CD4-positive, alpha-beta memory T cell (primary cell): ENCODE measurements at regions of chr12 and their contacts with region 1.

Region 1: GRCh38 chr12:8644345-8645248 is 18.0 kb downstream of the MFAP5 start:
- DNase-seq: peak; percentile 52 to 65 (median 59)
- H3K4me3 ChIP-seq: peak overlapping the region in 1 of 2 donors; percentile 36
- H3K4me3 Mint-ChIP-seq: peak overlapping the region; percentile 68 to 92 (median 82)
- H3K27ac ChIP-seq: peak overlapping the region; percentile 38
- H3K27ac Mint-ChIP-seq: peak overlapping the region; percentile 83 to 98 (median 94)
- H3K4me1 ChIP-seq: peaks cover 42% of the 10 kb centered on the region
- H3K4me1 Mint-ChIP-seq: peaks cover 37 to 60% (median 46%) of the 10 kb centered on the region in 4 donors
- H3K27me3 ChIP-seq: no peaks in the 10 kb centered on the region
- H3K27me3 Mint-ChIP-seq: no peaks in the 10 kb centered on the region

Region 2: DNA sequence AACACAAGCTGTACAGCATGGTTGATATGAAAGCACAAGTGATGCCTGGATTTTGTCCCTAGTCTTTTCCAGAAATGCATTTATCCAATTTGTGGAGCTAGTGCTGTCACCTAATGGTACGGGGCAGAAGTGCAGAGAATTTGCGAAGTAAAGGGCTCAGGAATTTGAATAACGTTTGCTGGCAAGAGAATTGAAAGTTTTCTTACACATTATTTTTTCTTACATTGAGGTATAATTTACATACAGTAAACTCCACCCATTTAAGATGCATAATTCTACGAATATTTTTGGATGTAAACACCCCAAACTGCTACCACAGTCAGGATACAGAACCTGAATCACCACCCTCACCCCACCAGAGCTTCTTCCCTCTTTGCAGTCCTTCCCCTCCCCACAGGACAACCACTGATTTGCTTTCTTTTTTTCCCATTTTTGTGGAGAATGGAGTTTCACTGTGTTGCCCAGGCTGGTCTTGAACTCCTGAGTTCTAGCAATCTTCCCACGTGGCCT is 35.5 kb before region 1 on chr12:
- CTCF ChIA-PET with region 1: interaction called, 19 read pairs
- POLR2A ChIA-PET with region 1: interaction called, 12 read pairs
- intact Hi-C with region 1: no loop called
- DNase-seq: peak in 3 of 5 donors; percentile 2 to 10 (median 6)
- H3K4me3 ChIP-seq: no peak overlapping the region
- H3K4me3 Mint-ChIP-seq: peak overlapping the region; percentile 52 to 80 (median 72)
- H3K27ac ChIP-seq: no peak overlapping the region
- H3K27ac Mint-ChIP-seq: peak overlapping the region in 3 of 7 donors; percentile 3 to 57 (median 38)
- H3K4me1 ChIP-seq: peaks cover 5% of the 10 kb centered on the region
- H3K4me1 Mint-ChIP-seq: peaks cover 10 to 21% (median 15%) of the 10 kb centered on the region in 4 donors
- H3K27me3 ChIP-seq: no peaks in the 10 kb centered on the region
- H3K27me3 Mint-ChIP-seq: peaks cover 4% of the 10 kb centered on the region in 2 donors

Region 3: DNA sequence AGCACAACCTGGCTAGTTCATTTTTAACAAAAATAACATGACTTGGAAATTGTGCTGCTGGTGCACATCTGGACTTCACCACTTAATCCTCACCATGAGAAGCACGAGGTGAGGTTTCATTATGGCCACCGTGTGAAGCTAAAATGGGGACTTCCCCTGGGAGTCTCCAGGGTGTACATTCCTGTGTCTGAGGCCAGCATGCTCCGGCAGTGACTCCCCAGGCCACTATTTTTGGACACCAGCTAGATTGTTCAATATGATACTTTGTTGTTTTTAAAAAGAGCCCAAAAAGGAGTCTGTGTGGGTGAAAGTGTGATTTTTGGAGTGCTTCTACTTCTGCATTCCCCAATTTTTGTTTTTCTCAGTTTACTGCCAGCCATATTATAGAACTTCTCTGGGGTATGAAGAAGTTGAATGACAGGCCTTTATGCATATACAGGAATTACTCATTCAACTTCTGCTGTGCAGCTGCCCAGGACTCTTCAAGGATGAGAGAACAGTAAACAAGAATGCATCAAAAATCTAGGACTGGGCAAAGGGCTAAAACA is 15.0 kb before region 1 on chr12:
- CTCF ChIA-PET with region 1: interaction called, 4 read pairs
- POLR2A ChIA-PET with region 1: interaction called, 12 read pairs
- intact Hi-C with region 1: no loop called
- DNase-seq: no peak
- H3K4me3 ChIP-seq: no peak overlapping the region
- H3K4me3 Mint-ChIP-seq: no peak overlapping the region
- H3K27ac ChIP-seq: no peak overlapping the region
- H3K27ac Mint-ChIP-seq: no peak overlapping the region
- H3K4me1 ChIP-seq: no peaks in the 10 kb centered on the region
- H3K4me1 Mint-ChIP-seq: no peaks in the 10 kb centered on the region
- H3K27me3 ChIP-seq: no peaks in the 10 kb centered on the region
- H3K27me3 Mint-ChIP-seq: peaks cover 0 to 2% of the 10 kb centered on the region in 2 donors

Region 4: GRCh38 chr12:8655421-8655820 is 10.8 kb after region 1 on chr12:
- CTCF ChIA-PET with region 1: interaction called, 20 read pairs
- POLR2A ChIA-PET with region 1: interaction called, 18 read pairs
- intact Hi-C with region 1: loop called (anchors 1 kb)
- DNase-seq: no peak
- H3K4me3 ChIP-seq: no peak overlapping the region
- H3K4me3 Mint-ChIP-seq: no peak overlapping the region
- H3K27ac ChIP-seq: no peak overlapping the region
- H3K27ac Mint-ChIP-seq: no peak overlapping the region
- H3K4me1 ChIP-seq: no peaks in the 10 kb centered on the region
- H3K4me1 Mint-ChIP-seq: peaks cover 0 to 1% (median 0%) of the 10 kb centered on the region in 4 donors
- H3K27me3 ChIP-seq: no peaks in the 10 kb centered on the region
- H3K27me3 Mint-ChIP-seq: peaks cover 0 to 3% of the 10 kb centered on the region in 2 donors

Region 5: GRCh38 chr12:8662593-8662992 is 18.0 kb after region 1 on chr12 and contains the start of gene MFAP5:
- CTCF ChIA-PET with region 1: interaction called, 20 read pairs
- POLR2A ChIA-PET with region 1: interaction called, 18 read pairs
- intact Hi-C with region 1: loop called (anchors 1 kb)
- DNase-seq: no peak
- H3K4me3 ChIP-seq: no peak within 1 kb of the TSS
- H3K4me3 Mint-ChIP-seq: no peak within 1 kb of the TSS
- H3K27ac ChIP-seq: no peak within 1 kb of the TSS
- H3K27ac Mint-ChIP-seq: no peak within 1 kb of the TSS
- H3K4me1 ChIP-seq: no peaks in the 10 kb centered on the region
- H3K4me1 Mint-ChIP-seq: no peaks in the 10 kb centered on the region
- H3K27me3 ChIP-seq: no peaks in the 10 kb centered on the region
- H3K27me3 Mint-ChIP-seq: peaks cover 5% of the 10 kb centered on the region in 2 donors
- total RNA-seq, gene MFAP5: not detected

Region 6: DNA sequence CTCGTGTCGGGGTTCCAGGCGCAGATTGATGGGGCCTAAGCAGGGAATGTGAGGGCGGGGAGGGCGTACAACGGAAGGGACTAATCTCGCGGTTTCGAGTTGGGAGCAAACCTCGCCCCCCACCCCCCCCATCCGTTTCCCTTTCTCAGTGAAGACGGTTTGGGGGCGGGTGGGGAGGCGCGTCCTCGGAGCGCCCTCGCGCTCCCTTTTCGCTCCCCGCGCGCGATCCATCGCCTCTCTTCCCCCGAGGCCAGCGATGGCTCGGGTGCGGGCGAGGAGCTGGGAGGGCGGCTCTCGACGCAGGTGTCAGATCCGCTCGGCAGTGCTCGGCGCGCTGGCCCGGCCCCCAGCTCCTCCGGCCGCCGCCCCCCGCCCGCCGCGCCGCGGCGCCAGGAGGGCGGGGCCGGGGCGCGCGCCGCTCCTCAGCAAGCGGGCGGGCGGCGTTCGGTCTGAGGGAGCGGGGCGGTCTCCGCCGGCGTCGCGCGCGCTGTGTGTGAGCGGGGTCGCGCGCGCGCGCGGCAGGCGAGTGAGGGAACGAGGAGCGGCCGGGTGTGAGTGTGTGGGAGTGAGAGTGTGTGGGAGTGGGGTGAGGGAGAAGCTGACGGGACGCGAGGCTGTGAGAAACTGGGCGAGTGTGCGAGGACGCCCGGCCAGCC is 53.0 kb after region 1 on chr12 and contains the start of gene RIMKLB:
- CTCF ChIA-PET with region 1: no interaction called
- POLR2A ChIA-PET with region 1: interaction called, 6 read pairs
- intact Hi-C with region 1: loop called (anchors 2 kb)
- DNase-seq: peak; percentile 69 to 77 (median 75)
- H3K4me3 ChIP-seq: peak within 1 kb of the TSS; percentile 38 to 74
- H3K4me3 Mint-ChIP-seq: peak within 1 kb of the TSS; percentile 90 to 96 (median 92)
- H3K27ac ChIP-seq: peak within 1 kb of the TSS; percentile 59
- H3K27ac Mint-ChIP-seq: peak within 1 kb of the TSS; percentile 87 to 97 (median 91)
- H3K4me1 ChIP-seq: peaks cover 18% of the 10 kb centered on the region
- H3K4me1 Mint-ChIP-seq: peaks cover 19 to 29% (median 22%) of the 10 kb centered on the region in 4 donors
- H3K27me3 ChIP-seq: no peaks in the 10 kb centered on the region
- H3K27me3 Mint-ChIP-seq: no peaks in the 10 kb centered on the region
- total RNA-seq, gene RIMKLB: 23.0 to 27.3 TPM

Region 7: DNA sequence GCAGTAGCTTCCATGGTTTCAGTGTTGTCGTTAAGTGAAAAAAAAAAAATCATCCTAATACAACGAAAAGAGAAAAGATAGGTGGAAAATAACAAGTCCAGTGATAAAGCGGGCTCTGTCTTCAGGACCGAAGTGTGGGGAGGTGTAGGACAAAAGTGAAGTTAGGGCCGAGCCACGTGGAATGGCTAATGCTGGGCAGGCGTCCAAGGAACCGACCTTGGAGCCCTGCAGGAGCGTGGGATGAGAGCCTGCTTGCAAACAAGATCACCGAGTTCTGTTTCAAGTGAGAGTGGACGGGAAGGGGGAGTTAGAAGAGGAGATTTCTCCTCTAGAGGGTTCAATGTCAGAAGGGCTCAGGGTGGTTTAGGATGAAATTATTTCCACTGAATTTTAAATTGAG is 200.1 kb after region 1 on chr12:
- CTCF ChIA-PET with region 1: no interaction called
- POLR2A ChIA-PET with region 1: no interaction called
- intact Hi-C with region 1: no loop called
- DNase-seq: no peak
- H3K4me3 ChIP-seq: no peak overlapping the region
- H3K4me3 Mint-ChIP-seq: peak overlapping the region in 1 of 8 donors; percentile 63
- H3K27ac ChIP-seq: no peak overlapping the region
- H3K27ac Mint-ChIP-seq: no peak overlapping the region
- H3K4me1 ChIP-seq: no peaks in the 10 kb centered on the region
- H3K4me1 Mint-ChIP-seq: no peaks in the 10 kb centered on the region
- H3K27me3 ChIP-seq: no peaks in the 10 kb centered on the region
- H3K27me3 Mint-ChIP-seq: peaks cover 4 to 14% of the 10 kb centered on the region in 2 donors